ENCODE measurements at regions of chr17 and their contacts with region 1.

Region 1: GRCh38 chr17:28717578-28718333 is at the start of gene RAB34:
- DNase-seq: peak; percentile 23
- H3K4me3 Mint-ChIP-seq: peak within 1 kb of the TSS; percentile 44
- H3K27ac Mint-ChIP-seq: peak within 1 kb of the TSS; percentile 64
- H3K4me1 Mint-ChIP-seq: peaks cover 40% of the 10 kb centered on the region
- H3K27me3 Mint-ChIP-seq: peaks cover 25% of the 10 kb centered on the region
- total RNA-seq, gene RAB34: 6.5 to 7.4 TPM

Region 2: GRCh38 chr17:28346746-28347246 is 371.0 kb before region 1 on chr17:
- CTCF ChIA-PET with region 1: no interaction called
- POLR2A ChIA-PET with region 1: no interaction called
- DNase-seq: no peak
- H3K4me3 Mint-ChIP-seq: no peak overlapping the region
- H3K27ac Mint-ChIP-seq: no peak overlapping the region
- H3K4me1 Mint-ChIP-seq: no peaks in the 10 kb centered on the region
- H3K27me3 Mint-ChIP-seq: no peaks in the 10 kb centered on the region

Region 3: GRCh38 chr17:28571255-28572122 is 146.3 kb before region 1 on chr17 and contains the start of gene PIGS:
- CTCF ChIA-PET with region 1: interaction called, 4 read pairs
- POLR2A ChIA-PET with region 1: interaction called, 14 read pairs
- DNase-seq: peak; percentile 94
- H3K4me3 Mint-ChIP-seq: peak within 1 kb of the TSS; percentile 96
- H3K27ac Mint-ChIP-seq: peak within 1 kb of the TSS; percentile 84
- H3K4me1 Mint-ChIP-seq: peaks cover 60% of the 10 kb centered on the region
- H3K27me3 Mint-ChIP-seq: no peaks in the 10 kb centered on the region
- total RNA-seq, gene PIGS: 66.3 to 66.6 TPM

Region 4: GRCh38 chr17:28661635-28662537 is 55.9 kb before region 1 on chr17 and contains the starts of genes SDF2 and SUPT6H:
- CTCF ChIA-PET with region 1: interaction called, 11 read pairs
- POLR2A ChIA-PET with region 1: interaction called, 26 read pairs
- DNase-seq: peak; percentile 94
- H3K4me3 Mint-ChIP-seq: peak within 1 kb of the TSS; percentile 98
- H3K27ac Mint-ChIP-seq: peak within 1 kb of the TSS; percentile 98
- H3K4me1 Mint-ChIP-seq: peaks cover 52% of the 10 kb centered on the region
- H3K27me3 Mint-ChIP-seq: no peaks in the 10 kb centered on the region
- total RNA-seq, gene SDF2: 49.0 to 52.9 TPM
- total RNA-seq, gene SUPT6H: 60.7 to 65.8 TPM

Region 5: GRCh38 chr17:28693869-28694268 is 23.9 kb before region 1 on chr17:
- CTCF ChIA-PET with region 1: no interaction called
- POLR2A ChIA-PET with region 1: no interaction called
- DNase-seq: no peak
- H3K4me3 Mint-ChIP-seq: no peak overlapping the region
- H3K27ac Mint-ChIP-seq: no peak overlapping the region
- H3K4me1 Mint-ChIP-seq: no peaks in the 10 kb centered on the region
- H3K27me3 Mint-ChIP-seq: no peaks in the 10 kb centered on the region